ENCODE measurements at regions of chr1 and their contacts with region 1.

Region 1: GRCh38 chr1:167936068-167936929 is at the start of gene DCAF6:
- DNase-seq: peak; percentile 94 to 98
- H3K4me3 ChIP-seq: peak within 1 kb of the TSS; percentile 90 to 95 (median 92)
- H3K27ac ChIP-seq: peak within 1 kb of the TSS; percentile 93
- H3K4me1 ChIP-seq: peaks cover 0 to 4% (median 0%) of the 10 kb centered on the region in 4 experiments; a peak in 2 of 7 replicates
- H3K27me3 ChIP-seq: no peaks in the 10 kb centered on the region
- CTCF ChIP-seq: no peak
- EP300 ChIP-seq: no peak
- POLR2A ChIP-seq: peak; percentile 92 to 94
- RAD21 ChIP-seq: no peak
- total RNA-seq, gene DCAF6: 16.5 and 17.4 TPM in 2 replicates

Region 2: GRCh38 chr1:167862432-167863076 is 73.7 kb before region 1 on chr1:
- CTCF ChIA-PET with region 1: no interaction called
- POLR2A ChIA-PET with region 1: no interaction called
- DNase-seq: no peak
- H3K4me3 ChIP-seq: no peak overlapping the region
- H3K27ac ChIP-seq: no peak overlapping the region
- H3K4me1 ChIP-seq: peaks cover 0 to 4% (median 3%) of the 10 kb centered on the region in 4 experiments; a peak in 2 of 7 replicates
- H3K27me3 ChIP-seq: no peaks in the 10 kb centered on the region
- CTCF ChIP-seq: no peak
- EP300 ChIP-seq: no peak
- POLR2A ChIP-seq: no peak
- RAD21 ChIP-seq: no peak

Region 3: DNA sequence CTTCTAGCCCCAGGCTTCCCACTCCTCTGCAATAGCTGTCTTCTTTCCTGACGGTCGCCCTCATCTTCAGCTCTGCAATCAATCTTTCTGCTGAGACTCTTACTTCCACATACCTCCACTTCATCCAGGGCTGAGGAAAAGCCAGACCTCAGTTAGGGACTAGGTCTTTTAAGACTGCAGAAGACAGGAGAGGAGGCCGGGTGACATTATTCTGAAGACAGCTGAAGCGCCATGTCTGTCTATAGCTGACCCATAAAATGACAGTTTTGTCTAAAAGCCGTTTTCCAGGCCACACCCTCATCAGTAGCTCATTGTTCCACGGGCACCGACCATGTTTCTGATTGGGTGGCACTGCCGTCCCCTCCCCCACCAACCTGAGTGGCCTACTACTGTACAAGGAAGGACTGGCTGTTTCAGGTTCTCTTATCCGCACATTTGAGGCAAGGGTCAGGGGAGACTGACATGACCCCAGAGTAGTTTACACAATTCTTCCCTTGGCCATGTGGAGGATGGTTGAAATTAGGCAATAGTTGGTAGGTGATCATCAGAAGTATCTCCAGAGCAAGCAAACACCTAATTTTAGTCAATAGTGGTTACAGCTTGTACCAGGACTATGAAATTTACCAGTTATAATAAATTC is 22.3 kb before region 1 on chr1 and contains the start of gene ADCY10:
- CTCF ChIA-PET with region 1: interaction called, 3 read pairs
- POLR2A ChIA-PET with region 1: interaction called, 22 read pairs
- DNase-seq: no peak
- H3K4me3 ChIP-seq: no peak within 1 kb of the TSS
- H3K27ac ChIP-seq: no peak within 1 kb of the TSS
- H3K4me1 ChIP-seq: no peaks in the 10 kb centered on the region
- H3K27me3 ChIP-seq: no peaks in the 10 kb centered on the region
- CTCF ChIP-seq: no peak
- EP300 ChIP-seq: no peak
- POLR2A ChIP-seq: no peak
- RAD21 ChIP-seq: no peak
- total RNA-seq, gene ADCY10: not detected in 2 replicates

Region 4: DNA sequence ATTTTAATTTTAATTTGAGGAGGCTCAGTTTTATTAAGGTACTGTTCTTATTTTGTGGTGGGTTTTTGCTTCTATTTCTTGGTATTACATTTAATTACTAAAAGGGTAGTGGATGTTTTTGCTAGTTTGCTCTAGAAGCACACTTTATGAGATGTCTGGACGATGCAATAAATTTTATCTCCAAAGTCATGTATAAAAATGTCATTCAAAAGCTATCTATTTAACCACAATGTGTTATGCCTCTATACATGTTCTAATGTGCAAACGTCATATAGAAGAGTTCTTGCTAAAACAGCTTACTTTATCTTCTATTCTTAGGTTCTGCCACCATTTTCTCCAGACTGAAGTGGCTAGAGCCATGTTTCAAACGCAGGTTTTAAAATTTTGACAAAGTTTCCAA is 13.5 kb after region 1 on chr1:
- CTCF ChIA-PET with region 1: no interaction called
- POLR2A ChIA-PET with region 1: interaction called, 14 read pairs
- DNase-seq: no peak
- H3K4me3 ChIP-seq: no peak overlapping the region
- H3K27ac ChIP-seq: no peak overlapping the region
- H3K4me1 ChIP-seq: no peaks in the 10 kb centered on the region
- H3K27me3 ChIP-seq: no peaks in the 10 kb centered on the region
- CTCF ChIP-seq: no peak
- EP300 ChIP-seq: no peak
- POLR2A ChIP-seq: no peak
- RAD21 ChIP-seq: no peak

Region 5: DNA sequence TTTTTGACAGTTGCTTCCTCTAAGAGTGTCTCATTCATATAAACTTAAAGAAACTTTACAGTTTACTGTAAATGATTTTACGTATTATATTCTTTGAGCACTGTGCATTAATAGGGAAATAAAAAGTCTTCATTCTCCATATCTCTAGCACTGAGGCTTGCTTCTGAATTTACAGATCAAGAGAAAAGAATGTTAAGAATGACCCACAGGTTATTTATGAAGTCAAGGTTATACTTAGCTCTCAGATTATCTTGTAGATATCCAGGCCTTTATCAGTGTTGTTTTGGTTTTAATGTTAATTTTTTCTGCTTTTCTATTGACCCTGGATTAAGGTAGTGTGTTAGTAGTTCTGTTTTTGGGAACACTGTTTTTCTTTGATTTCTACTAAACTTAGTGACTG is 109.0 kb after region 1 on chr1:
- CTCF ChIA-PET with region 1: no interaction called
- POLR2A ChIA-PET with region 1: no interaction called
- DNase-seq: no peak
- H3K4me3 ChIP-seq: no peak overlapping the region
- H3K27ac ChIP-seq: no peak overlapping the region
- H3K4me1 ChIP-seq: no peaks in the 10 kb centered on the region
- H3K27me3 ChIP-seq: no peaks in the 10 kb centered on the region
- CTCF ChIP-seq: no peak
- EP300 ChIP-seq: no peak
- POLR2A ChIP-seq: no peak
- RAD21 ChIP-seq: no peak

Measured in H1 (cell line).